ENCODE measurements at regions of chr18 and their contacts with region 1.

Region 1: GRCh38 chr18:35143622-35144596 is 96.9 kb upstream of the ZNF397 start:
- DNase-seq: peak; percentile 64 to 77 (median 74)
- H3K4me3 ChIP-seq: no peak overlapping the region
- H3K27ac ChIP-seq: no peak overlapping the region
- H3K4me1 ChIP-seq: peaks cover 0 to 19% (median 12%) of the 10 kb centered on the region in 4 experiments
- H3K27me3 ChIP-seq: no peaks in the 10 kb centered on the region

Region 2: GRCh38 chr18:34999756-35000289 is 144.1 kb before region 1 on chr18:
- CTCF ChIA-PET with region 1: interaction called, 10 read pairs
- POLR2A ChIA-PET with region 1: interaction called, 3 read pairs
- DNase-seq: no peak
- H3K4me3 ChIP-seq: no peak overlapping the region
- H3K27ac ChIP-seq: no peak overlapping the region
- H3K4me1 ChIP-seq: no peaks in the 10 kb centered on the region
- H3K27me3 ChIP-seq: no peaks in the 10 kb centered on the region

Region 3: DNA sequence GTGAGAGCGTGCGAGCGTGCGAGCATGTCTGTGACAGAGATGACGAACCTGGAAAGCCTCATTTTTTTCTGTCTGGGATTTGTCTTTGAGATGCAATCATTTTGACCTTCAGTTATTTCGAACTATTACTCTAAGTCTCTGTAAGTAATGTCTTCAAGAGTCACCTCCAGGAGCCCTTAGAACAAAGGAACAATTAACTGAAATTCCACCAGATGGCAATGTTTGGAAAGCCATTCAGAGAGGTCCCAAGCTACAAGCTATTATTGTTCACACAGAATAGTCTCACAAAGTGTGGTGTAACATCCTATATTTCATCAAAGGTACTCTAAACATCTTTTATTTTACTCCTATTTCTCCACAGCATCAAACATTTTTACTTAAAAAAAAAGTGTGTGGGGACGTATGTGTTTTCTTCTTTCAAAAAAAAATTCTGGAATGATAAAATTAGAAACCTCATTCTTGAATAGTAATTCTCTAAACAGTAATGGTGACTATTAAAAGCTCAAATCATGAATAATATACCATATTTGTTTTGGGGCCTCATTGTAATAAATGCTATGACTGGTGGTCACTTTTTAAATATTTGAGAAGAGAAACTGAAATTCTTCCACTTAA is 137.8 kb before region 1 on chr18:
- CTCF ChIA-PET with region 1: interaction called, 73 read pairs
- POLR2A ChIA-PET with region 1: interaction called, 3 read pairs
- DNase-seq: peak; percentile 71 to 83 (median 76)
- H3K4me3 ChIP-seq: no peak overlapping the region
- H3K27ac ChIP-seq: no peak overlapping the region
- H3K4me1 ChIP-seq: no peaks in the 10 kb centered on the region
- H3K27me3 ChIP-seq: no peaks in the 10 kb centered on the region

Region 4: DNA sequence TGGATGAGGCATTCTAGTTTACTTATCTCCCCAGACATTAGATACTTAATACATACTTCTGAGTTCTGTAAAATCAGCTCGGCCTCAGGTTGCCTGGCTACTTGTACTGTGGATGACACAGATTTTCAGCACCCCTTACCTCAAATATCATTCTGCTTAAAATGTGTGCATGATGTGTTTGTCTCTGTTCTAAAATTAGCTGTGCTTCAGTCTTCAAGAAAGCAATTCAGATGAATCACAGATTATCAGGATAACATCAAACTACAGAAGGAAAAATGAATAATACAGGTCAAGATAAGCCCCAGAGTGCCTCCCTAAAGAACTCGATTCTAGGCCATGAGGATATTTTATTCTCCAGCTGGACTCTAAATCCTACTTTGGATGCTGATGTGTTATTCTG is 124.0 kb before region 1 on chr18:
- CTCF ChIA-PET with region 1: interaction called, 138 read pairs
- POLR2A ChIA-PET with region 1: interaction called, 5 read pairs
- DNase-seq: no peak
- H3K4me3 ChIP-seq: no peak overlapping the region
- H3K27ac ChIP-seq: no peak overlapping the region
- H3K4me1 ChIP-seq: no peaks in the 10 kb centered on the region
- H3K27me3 ChIP-seq: no peaks in the 10 kb centered on the region

Region 5: DNA sequence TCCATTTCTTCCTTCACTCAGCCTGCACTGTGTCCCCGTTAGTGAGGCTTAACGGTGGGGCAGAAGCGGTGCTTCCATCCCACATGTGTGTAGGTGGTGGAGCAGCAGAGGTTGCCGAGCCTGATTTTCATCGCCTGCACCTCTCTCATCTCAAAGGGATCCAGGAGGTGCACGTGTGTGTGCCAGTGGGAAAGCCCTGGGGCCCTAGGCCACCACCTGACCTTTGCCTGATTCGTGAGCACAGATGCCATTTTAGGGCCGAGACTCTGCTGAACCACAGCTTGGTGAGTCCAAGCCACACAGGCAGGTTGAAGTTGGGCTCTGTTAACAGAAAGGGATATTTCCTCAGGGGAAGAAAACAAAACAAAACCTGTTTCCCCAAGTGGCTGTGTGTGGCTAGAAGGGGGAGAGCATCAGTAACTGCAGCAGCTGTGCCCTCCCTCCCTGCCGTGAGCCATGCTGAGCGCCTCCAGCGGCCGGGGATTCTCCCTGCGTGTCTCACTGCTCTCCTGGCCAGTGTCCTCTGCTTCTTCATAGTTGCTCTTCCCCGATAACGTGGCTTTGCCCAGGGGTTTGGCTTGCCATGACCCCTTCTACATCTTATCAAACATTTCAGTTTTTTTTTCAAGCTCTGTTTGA is 21.2 kb before region 1 on chr18:
- CTCF ChIA-PET with region 1: interaction called, 29 read pairs
- POLR2A ChIA-PET with region 1: no interaction called
- DNase-seq: peak in 2 of 3 donors; percentile 75 to 79
- H3K4me3 ChIP-seq: peak overlapping the region in 1 of 7 experiments; percentile 0
- H3K27ac ChIP-seq: peak overlapping the region in 1 of 2 experiments; percentile 54
- H3K4me1 ChIP-seq: peaks cover 0 to 36% (median 18%) of the 10 kb centered on the region in 4 experiments
- H3K27me3 ChIP-seq: no peaks in the 10 kb centered on the region